ENCODE measurements at regions of chr5 and their contacts with region 1.

Region 1: DNA sequence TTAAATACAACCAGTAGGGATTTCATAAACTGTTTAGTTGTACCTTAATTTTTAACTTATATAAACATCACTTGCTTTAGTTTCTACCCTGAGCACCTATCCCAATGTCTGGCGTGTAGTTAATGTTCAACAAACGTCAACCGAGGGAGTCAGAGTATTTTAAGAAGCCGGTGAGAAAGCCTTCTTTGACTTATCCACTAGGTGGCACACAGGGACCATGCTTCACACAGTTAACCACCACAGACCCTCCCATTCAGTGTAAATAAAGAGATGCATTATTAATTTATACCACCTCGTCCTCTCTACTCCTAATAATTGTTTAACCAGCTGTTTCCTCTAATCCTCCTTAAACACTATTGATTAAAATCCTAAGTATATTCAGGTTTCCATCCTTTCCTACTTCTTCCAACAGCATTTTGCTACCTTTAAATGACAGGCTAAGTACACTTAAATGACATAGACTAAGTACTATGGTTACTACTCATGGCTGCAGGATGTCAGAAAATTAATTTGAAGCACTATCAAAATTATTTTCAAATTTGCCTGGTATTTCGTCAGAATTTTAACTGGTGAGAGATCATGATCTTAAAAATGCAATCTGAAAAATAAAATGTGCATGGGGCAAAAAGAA is 2.3 kb downstream of the HAPLN1 start:
- DNase-seq: peak; percentile 80
- H3K4me3 ChIP-seq: no peak overlapping the region
- H3K27ac ChIP-seq: no peak overlapping the region
- H3K4me1 ChIP-seq: peaks cover 3% of the 10 kb centered on the region
- H3K27me3 ChIP-seq: no peaks in the 10 kb centered on the region
- CTCF ChIP-seq: peak; percentile 87

Region 2: DNA sequence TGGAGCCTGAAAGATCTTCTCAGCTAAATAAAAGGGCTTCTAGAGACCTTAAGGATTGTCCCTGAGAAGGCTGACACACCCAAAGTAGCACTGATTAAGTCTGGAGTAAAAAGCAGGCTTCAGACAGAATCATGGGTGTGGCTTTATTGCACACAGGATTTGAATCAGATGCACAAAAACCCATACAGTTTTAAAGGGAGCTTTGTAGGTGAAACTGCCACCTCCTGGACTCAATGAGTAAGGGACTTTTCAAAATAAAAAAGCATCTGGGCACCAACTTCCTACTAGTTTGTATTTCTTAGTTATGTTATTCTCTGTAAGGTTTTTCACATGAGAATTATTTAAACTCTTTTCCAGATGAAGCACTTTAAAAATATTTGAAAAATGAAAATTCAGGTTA is 537.0 kb after region 1 on chr5:
- CTCF ChIA-PET with region 1: no interaction called
- POLR2A ChIA-PET with region 1: no interaction called
- intact Hi-C with region 1: loop called (anchors 2 kb)
- DNase-seq: peak; percentile 22
- H3K4me3 ChIP-seq: no peak overlapping the region
- H3K27ac ChIP-seq: no peak overlapping the region
- H3K4me1 ChIP-seq: no peaks in the 10 kb centered on the region
- H3K27me3 ChIP-seq: no peaks in the 10 kb centered on the region
- CTCF ChIP-seq: peak; percentile 25; the same call in 1 of the 2 replicates

Region 3: GRCh38 chr5:85049020-85049419 is 1330.7 kb after region 1 on chr5:
- CTCF ChIA-PET with region 1: no interaction called
- POLR2A ChIA-PET with region 1: no interaction called
- intact Hi-C with region 1: loop called (anchors 2 kb)
- DNase-seq: peak; percentile 51
- H3K4me3 ChIP-seq: no peak overlapping the region
- H3K27ac ChIP-seq: no peak overlapping the region
- H3K4me1 ChIP-seq: no peaks in the 10 kb centered on the region
- H3K27me3 ChIP-seq: no peaks in the 10 kb centered on the region
- CTCF ChIP-seq: peak; percentile 52

Measured in A673 (cell line).